Left colon (tissue), 2 donors: ENCODE measurements at regions of chr5 and their contacts with region 1.

Region 1: GRCh38 chr5:143413958-143414669 is 10.6 kb upstream of the NR3C1 start:
- DNase-seq: no peak
- ATAC-seq: no peak

Region 2: DNA sequence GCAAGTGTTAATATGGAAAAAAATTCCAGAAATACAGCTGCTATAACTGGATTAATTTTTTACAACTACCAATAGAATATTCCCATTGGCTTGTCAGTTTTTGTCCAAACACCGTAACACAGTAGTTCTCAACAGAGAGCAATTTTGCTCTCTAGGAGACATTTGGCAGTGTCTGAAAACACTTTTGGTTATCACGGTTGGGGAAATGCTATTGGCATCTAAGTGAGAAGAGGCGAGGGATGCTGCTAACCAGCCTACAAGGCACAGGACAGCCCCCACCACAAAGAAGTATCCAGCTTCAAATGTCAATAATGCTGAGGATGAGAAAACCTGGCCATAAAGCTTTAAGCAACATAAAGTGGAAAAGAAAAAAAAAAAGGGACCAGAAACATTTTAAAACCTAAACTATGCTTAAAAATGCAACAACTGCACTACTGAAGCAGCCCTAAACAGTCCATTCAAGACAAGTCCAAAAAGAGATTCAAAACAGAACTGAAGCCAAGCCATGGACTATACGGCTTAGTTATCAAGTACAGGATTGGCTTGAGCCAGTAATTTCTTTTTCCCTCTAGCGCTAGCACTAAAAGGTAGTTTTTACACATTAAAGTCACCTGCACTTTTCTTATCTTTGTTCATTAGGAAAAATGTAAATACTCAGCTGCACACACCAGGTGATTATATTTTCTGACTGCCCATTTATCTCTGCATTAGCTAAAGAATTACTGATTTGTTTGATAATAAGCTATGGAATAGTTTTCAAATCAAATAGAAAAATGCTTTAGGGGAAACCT is 94.5 kb before region 1 on chr5:
- intact Hi-C with region 1: no loop called
- DNase-seq: no peak
- ATAC-seq: no peak

Region 3: DNA sequence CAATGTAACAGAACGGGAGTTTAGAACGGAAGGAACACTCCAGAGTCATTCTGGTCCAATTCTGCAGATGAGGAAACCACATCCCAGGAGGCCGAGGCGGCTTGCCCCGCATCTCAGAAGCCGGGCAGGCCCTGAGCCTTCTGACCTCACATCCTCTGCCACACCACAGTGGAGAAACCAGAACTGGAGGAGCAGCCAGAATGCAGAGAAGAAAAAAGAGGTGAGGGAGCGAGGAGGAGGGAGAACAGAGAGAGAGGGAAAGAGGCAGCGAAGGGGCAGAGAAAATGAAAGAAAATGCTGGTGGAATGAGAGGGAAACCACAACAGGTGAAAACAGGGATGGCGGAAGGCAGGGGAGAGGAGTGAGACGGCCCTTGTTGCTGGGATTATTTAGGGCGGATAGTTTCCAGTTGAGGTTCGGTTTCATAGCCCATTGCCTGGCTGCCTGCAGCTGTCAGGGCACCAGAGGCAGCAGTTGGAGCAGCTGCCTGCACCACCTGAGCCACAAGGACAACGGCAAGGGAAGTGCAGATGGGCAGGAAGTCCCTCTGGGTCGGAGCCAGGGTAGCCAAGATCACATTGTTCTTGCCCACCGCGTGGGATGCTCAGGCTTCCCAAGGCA is 398.1 kb after region 1 on chr5 and contains the start of gene HMHB1:
- intact Hi-C with region 1: loop called in 1 of 2 experiments (anchors 10 kb)
- DNase-seq: no peak
- ATAC-seq: no peak
- total RNA-seq, gene HMHB1: not detected